ENCODE measurements at regions of chr5 and their contacts with region 1.

Region 1: DNA sequence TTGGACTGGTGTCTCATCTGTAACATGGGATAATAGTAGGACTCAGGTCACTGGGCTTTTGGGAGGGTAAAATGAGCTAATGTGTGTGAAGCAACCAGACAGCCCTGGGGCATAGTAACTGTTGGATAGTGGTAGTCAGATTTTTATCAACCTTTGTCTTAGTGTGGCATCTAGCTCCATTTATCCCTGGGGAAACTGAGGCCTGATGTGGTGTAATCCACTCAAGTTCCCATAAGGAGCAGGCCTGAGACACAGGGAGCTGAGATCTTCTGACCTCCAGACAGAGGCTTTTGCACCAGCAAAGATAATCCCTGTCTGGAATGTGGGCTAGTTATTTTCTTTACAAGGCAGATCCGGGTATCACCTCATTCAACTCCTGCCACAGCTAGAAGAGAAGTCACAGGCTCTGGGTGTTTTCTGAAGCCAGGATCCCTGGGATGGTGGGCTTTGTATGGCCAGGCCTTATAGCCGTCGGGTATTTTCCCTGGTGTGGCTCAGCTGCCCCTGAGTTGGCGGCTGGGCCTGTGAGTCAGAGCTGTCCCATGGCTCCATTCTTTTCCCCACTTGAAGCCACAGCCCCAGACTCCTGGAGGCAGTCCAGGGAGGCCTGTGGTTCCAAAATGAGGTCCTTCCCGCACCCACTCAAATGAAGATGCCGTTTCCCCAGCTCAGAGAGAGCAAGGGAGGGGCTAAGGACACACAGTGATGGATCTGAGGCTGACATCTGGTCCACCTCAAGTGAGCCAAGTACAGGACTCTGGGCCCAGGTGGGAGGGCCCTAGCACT is 26.1 kb upstream of the CSF1R start:
- DNase-seq: no peak
- H3K4me3 ChIP-seq: no peak overlapping the region
- H3K27ac ChIP-seq: peak overlapping the region; percentile 12 to 46 (median 28)
- H3K4me1 ChIP-seq: peaks cover 0 to 27% (median 3%) of the 10 kb centered on the region in 4 donors
- H3K27me3 ChIP-seq: no peaks in the 10 kb centered on the region
- CTCF ChIP-seq: no peak
- EP300 ChIP-seq: no peak
- POLR2A ChIP-seq: no peak

Region 2: DNA sequence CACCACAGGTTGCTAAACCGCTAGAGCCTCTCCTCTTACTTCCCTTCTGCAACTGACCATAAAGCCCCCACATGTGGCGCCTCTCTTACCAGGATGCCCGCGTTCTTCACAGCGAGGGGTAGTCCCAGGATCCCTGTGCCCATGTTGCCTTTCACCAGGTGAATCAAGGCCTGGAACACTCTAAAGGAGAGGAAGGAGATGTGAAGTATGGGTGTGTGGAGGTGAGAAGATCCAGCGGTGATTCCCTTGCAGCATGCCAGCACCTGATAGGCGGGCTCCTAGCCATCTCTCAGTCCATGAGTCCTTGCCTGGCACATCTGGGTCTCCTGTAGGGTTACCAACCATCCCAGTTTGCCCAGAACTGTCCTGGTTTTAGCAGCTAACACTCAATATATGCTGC is 1231.6 kb after region 1 on chr5:
- in situ Hi-C with region 1: no loop called
- intact Hi-C with region 1: loop called (anchors 5 kb)
- DNase-seq: no peak
- H3K4me3 ChIP-seq: no peak overlapping the region
- H3K27ac ChIP-seq: no peak overlapping the region
- H3K4me1 ChIP-seq: no peaks in the 10 kb centered on the region
- H3K27me3 ChIP-seq: peaks cover 16% of the 10 kb centered on the region
- CTCF ChIP-seq: no peak
- EP300 ChIP-seq: no peak
- POLR2A ChIP-seq: no peak

Measured in transverse colon (tissue), 4 donors.